ENCODE measurements at regions of chr19 and their contacts with region 1.

Region 1: GRCh38 chr19:50943074-50943828 is 9.6 kb downstream of the KLK5 start:
- DNase-seq: no peak
- ATAC-seq: no peak
- H3K4me3 ChIP-seq: no peak overlapping the region
- H3K27ac ChIP-seq: no peak overlapping the region
- H3K4me1 ChIP-seq: no peaks in the 10 kb centered on the region
- H3K27me3 ChIP-seq: peaks cover 0 to 4% (median 0%) of the 10 kb centered on the region in 3 donors
- CTCF ChIP-seq: no peak
- POLR2A ChIP-seq: no peak

Region 2: DNA sequence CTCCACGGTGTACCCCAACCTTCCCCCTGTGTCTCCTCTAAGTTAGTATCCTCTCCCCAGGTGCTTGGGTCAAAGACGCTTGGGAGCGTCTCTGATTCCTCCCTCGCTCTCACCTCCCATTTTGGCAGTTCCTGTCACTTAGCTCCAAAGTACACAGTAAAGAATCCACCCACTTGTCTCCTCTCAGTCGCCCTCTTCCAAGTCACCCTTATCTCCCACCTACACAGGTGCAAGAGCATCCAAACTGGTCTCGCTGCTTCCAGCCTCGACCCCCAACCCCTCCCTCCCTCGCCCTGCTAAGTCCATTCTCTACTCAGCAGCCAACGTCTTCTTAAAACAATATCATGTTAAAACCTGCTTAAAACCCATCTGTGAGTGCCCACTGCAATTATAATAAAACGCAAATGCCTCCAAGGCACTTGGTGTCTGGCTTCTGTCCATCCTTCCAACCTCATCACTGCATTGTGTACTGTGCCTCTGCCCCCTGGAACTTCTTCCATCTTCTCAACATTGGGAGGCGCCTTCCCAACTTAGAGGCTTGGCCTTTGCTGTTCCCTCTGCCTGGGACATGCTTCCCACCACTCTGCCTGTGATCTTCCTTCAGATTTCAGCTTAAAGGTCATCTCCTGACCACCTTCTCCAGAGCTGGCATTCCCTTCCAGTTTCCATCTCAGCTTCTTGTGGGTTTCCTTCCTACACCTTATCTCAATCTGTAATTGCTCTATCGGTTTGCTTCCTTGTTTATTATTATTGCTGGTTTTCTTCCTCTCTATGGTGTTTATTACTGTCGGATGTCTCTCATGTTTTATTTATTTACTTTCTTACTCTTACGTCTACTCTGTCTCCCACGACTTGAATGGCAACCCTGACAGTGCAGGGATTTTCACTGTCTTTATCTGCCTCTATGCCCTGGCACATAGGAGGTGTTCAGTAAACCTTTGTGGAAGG is 148.9 kb after region 1 on chr19:
- in situ Hi-C with region 1: no loop called
- intact Hi-C with region 1: no loop called
- DNase-seq: no peak
- ATAC-seq: no peak
- H3K4me3 ChIP-seq: no peak overlapping the region
- H3K27ac ChIP-seq: no peak overlapping the region
- H3K4me1 ChIP-seq: no peaks in the 10 kb centered on the region
- H3K27me3 ChIP-seq: no peaks in the 10 kb centered on the region
- CTCF ChIP-seq: no peak
- POLR2A ChIP-seq: no peak

Region 3: GRCh38 chr19:52700673-52701072 is 1757.4 kb after region 1 on chr19:
- in situ Hi-C with region 1: no loop called
- intact Hi-C with region 1: loop called (anchors 10 kb)
- DNase-seq: no peak
- ATAC-seq: no peak
- H3K4me3 ChIP-seq: no peak overlapping the region
- H3K27ac ChIP-seq: no peak overlapping the region
- H3K4me1 ChIP-seq: no peaks in the 10 kb centered on the region
- H3K27me3 ChIP-seq: no peaks in the 10 kb centered on the region
- CTCF ChIP-seq: no peak
- POLR2A ChIP-seq: no peak